ENCODE measurements at regions of chr4 and their contacts with region 1.

Region 1: GRCh38 chr4:140150886-140151698 is 2.9 kb downstream of the MAML3 start:
- DNase-seq: peak; percentile 93 to 96
- H3K4me3 ChIP-seq: peak overlapping the region; percentile 66
- H3K27ac ChIP-seq: peak overlapping the region; percentile 98 to 99
- H3K4me1 ChIP-seq: no peaks in the 10 kb centered on the region
- H3K27me3 ChIP-seq: no peaks in the 10 kb centered on the region
- CTCF ChIP-seq: no peak
- POLR2A ChIP-seq: peak; percentile 39 to 68

Region 2: DNA sequence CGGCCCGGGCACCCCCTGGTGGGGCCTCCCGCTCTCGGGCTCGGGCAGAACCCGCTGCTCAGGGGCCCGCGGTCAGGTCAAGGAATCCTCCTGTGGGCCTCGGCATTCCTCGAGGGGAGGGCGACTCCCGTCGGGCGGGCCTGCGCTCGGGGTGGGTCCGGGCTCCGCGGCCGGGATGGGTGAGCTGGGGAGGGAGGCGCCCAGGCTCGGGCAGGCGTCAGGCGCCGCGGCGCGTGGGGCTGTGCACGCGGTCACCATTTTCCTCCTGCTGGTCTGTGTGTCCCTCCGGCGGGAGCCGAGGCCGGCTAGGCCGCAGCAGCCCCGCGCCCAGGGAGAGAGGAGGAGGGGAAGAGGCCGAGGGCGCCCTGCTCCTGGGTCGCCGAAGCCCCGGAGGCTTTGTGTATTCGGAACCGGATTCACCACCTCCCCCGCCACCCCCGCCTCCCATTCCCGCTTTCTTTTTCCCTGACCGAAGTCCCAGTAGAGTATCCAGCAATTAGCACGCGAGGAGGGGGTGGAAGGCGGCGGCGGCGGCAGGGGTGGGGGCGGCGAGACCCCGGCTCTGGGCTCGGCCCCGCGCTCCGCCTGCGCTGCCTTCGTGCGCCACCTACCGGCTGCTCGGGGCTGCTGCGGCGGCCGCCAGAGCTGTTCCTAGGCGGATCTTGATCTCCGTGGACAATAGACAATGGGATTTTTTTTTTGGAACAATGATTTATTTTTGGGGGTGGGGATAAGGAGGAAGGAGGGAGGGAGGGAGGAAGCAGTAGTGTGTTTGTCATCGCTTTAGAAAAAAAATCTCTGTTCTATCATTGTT is 101.9 kb after region 1 on chr4:
- intact Hi-C with region 1: loop called (anchors 2 kb)
- DNase-seq: peak; percentile 79 to 82
- H3K4me3 ChIP-seq: peak overlapping the region; percentile 58 to 69
- H3K27ac ChIP-seq: peak overlapping the region; percentile 97 to 99
- H3K4me1 ChIP-seq: peaks cover 0 to 14% of the 10 kb centered on the region in 2 donors
- H3K27me3 ChIP-seq: no peaks in the 10 kb centered on the region
- CTCF ChIP-seq: peak; percentile 85 to 100 (median 90)
- POLR2A ChIP-seq: peak in 1 of 2 donors; percentile 35